SK-N-SH (cell line): ENCODE measurements at regions of chr1 and their contacts with region 1.

Region 1: GRCh38 chr1:226201029-226201593 is 14.6 kb upstream of the ACBD3 start:
- DNase-seq: no peak
- H3K4me3 ChIP-seq: no peak overlapping the region
- H3K27ac ChIP-seq: no peak overlapping the region
- H3K4me1 ChIP-seq: no peaks in the 10 kb centered on the region
- H3K27me3 ChIP-seq: no peaks in the 10 kb centered on the region; the same call in 1 of the 2 replicates
- CTCF ChIP-seq: peak; percentile 49
- EP300 ChIP-seq: no peak
- RAD21 ChIP-seq: peak; percentile 43

Region 2: GRCh38 chr1:226135059-226135651 is 66.0 kb before region 1 on chr1:
- CTCF ChIA-PET with region 1: interaction called, 23 read pairs
- POLR2A ChIA-PET with region 1: no interaction called
- DNase-seq: peak; percentile 80
- H3K4me3 ChIP-seq: no peak overlapping the region
- H3K27ac ChIP-seq: no peak overlapping the region; a peak in 2 of 4 replicates
- H3K4me1 ChIP-seq: peaks cover 0 to 16% of the 10 kb centered on the region in 2 experiments; a peak in 1 of 4 replicates
- H3K27me3 ChIP-seq: no peaks in the 10 kb centered on the region
- CTCF ChIP-seq: no peak
- EP300 ChIP-seq: no peak
- RAD21 ChIP-seq: 0 out of 2 replicates have a peak, but pooled peaks have one; percentile 10

Region 3: GRCh38 chr1:226186124-226187018 is 14.7 kb before region 1 on chr1 and contains the start of gene ACBD3:
- CTCF ChIA-PET with region 1: interaction called, 16 read pairs
- POLR2A ChIA-PET with region 1: interaction called, 4 read pairs
- DNase-seq: peak; percentile 98
- H3K4me3 ChIP-seq: peak within 1 kb of the TSS; percentile 71 to 82
- H3K27ac ChIP-seq: peak within 1 kb of the TSS; percentile 78 to 88
- H3K4me1 ChIP-seq: peaks cover 0 to 12% of the 10 kb centered on the region in 2 experiments; a peak in 3 of 4 replicates
- H3K27me3 ChIP-seq: no peaks in the 10 kb centered on the region
- CTCF ChIP-seq: peak; percentile 16; the same call in 1 of the 2 replicates
- EP300 ChIP-seq: no peak
- RAD21 ChIP-seq: no peak
- polyA plus RNA-seq, gene ACBD3: 17.8 and 26.3 TPM in 2 replicates

Region 4: DNA sequence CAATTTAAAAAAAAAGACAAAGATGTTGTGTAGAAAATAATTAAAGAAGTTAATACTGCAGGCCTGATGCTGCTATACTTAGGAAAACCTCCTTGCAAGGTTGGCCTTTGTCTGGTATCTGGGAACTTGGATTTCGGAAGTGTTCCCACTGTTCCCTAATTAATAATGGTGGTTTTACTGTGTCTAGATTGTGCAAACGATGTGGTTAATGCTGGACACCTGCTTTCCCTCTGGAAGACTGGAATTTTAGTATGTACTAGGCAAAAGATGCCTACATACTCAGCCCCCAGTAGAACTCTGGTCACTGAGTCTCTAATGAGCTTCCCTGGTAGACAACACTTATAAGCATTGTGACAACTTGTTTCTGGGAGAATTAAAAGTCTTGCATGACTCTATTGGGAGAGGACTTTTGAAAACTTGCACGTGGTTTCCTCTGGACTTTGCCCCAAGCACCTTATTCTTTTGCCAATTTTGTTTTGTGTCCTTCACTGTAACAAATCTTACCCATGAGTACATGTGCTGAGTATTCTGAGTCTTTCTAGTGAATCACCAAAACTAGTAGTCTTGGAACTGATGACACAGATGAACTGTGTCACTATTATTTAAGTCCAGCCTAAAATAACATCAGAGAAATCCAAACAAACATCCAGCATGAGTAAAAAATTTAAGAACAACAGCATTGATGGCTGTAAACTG is 67.5 kb after region 1 on chr1:
- CTCF ChIA-PET with region 1: no interaction called
- POLR2A ChIA-PET with region 1: no interaction called
- DNase-seq: no peak
- H3K4me3 ChIP-seq: no peak overlapping the region
- H3K27ac ChIP-seq: no peak overlapping the region
- H3K4me1 ChIP-seq: no peaks in the 10 kb centered on the region
- H3K27me3 ChIP-seq: no peaks in the 10 kb centered on the region
- CTCF ChIP-seq: no peak
- EP300 ChIP-seq: no peak
- RAD21 ChIP-seq: no peak

Region 5: GRCh38 chr1:226293553-226293920 is 92.4 kb after region 1 on chr1:
- CTCF ChIA-PET with region 1: no interaction called
- POLR2A ChIA-PET with region 1: no interaction called
- DNase-seq: no peak
- H3K4me3 ChIP-seq: no peak overlapping the region
- H3K27ac ChIP-seq: no peak overlapping the region
- H3K4me1 ChIP-seq: no peaks in the 10 kb centered on the region
- H3K27me3 ChIP-seq: no peaks in the 10 kb centered on the region
- CTCF ChIP-seq: no peak
- EP300 ChIP-seq: no peak
- RAD21 ChIP-seq: no peak